ENCODE measurements at regions of chr5 and their contacts with region 1.

Region 1: GRCh38 chr5:79840084-79840990 is 150.7 kb downstream of the CMYA5 start:
- DNase-seq: no peak
- ATAC-seq: no peak
- H3K4me3 Mint-ChIP-seq: no peak overlapping the region
- H3K27ac Mint-ChIP-seq: no peak overlapping the region
- H3K4me1 Mint-ChIP-seq: peaks cover 8% of the 10 kb centered on the region
- H3K27me3 Mint-ChIP-seq: no peaks in the 10 kb centered on the region
- CTCF ChIP-seq: no peak

Region 2: GRCh38 chr5:79829260-79829659 is 11.1 kb before region 1 on chr5:
- CTCF ChIA-PET with region 1: interaction called, 16 read pairs
- POLR2A ChIA-PET with region 1: no interaction called
- DNase-seq: peak; percentile 68
- ATAC-seq: peak; percentile 100
- H3K4me3 Mint-ChIP-seq: no peak overlapping the region
- H3K27ac Mint-ChIP-seq: no peak overlapping the region
- H3K4me1 Mint-ChIP-seq: no peaks in the 10 kb centered on the region
- H3K27me3 Mint-ChIP-seq: no peaks in the 10 kb centered on the region
- CTCF ChIP-seq: peak; percentile 53